OCI-LY7 (cell line): ENCODE measurements at regions of chr4 and their contacts with region 1.

Region 1: GRCh38 chr4:1628892-1629698 is 55.0 kb downstream of the FAM53A start:
- DNase-seq: peak; percentile 57
- H3K4me3 ChIP-seq: no peak overlapping the region
- H3K27ac ChIP-seq: no peak overlapping the region
- H3K4me1 ChIP-seq: no peaks in the 10 kb centered on the region
- CTCF ChIP-seq: peak; percentile 86

Region 2: GRCh38 chr4:1351854-1352633 is 277.1 kb before region 1 on chr4:
- CTCF ChIA-PET with region 1: no interaction called
- POLR2A ChIA-PET with region 1: interaction called, 4 read pairs
- intact Hi-C with region 1: loop called (anchors 5 kb)
- DNase-seq: peak; percentile 79
- H3K4me3 ChIP-seq: no peak overlapping the region
- H3K27ac ChIP-seq: no peak overlapping the region
- H3K4me1 ChIP-seq: peaks cover 16% of the 10 kb centered on the region
- CTCF ChIP-seq: peak; percentile 88